ENCODE measurements at regions of chr6 and their contacts with region 1.

Region 1: DNA sequence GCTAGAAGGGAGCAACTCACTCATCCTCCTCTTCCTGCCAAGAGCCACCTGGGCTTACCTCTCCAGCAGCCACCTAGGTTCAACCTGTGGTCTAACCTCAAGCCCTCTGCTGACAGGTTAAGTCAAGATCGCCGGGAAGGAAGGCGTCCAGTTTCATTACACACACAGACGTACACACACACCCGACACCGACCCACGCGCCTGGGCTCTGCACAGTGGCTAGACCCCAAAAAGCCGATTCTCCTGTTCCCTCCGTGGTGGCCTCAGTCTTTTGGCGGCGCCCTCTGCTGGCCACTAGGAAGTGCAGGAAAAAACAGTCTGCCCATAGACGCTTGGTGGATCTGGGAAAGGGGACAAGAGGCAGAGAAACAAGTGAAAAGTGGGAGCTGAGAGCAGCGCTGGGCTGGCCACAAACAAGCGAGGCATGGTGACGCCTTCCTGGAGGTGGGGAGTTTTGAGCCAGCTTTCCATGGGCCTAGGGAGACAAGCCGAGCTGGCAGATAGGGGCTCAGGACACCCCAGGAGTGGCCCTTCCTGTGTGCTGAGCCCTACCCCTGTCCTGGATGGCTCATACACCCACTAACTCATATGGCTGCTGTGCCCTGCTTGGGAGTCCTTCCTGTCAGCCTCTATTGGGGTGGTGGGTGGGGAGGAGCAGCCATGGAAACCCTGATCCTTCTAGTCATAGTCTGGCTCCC is 52.7 kb downstream of the MRPL14 start:
- DNase-seq: peak; percentile 67 to 73
- ATAC-seq: peak; percentile 61 to 86
- H3K4me3 ChIP-seq: no peak overlapping the region
- H3K27ac ChIP-seq: peak overlapping the region; percentile 87 to 97
- H3K4me1 ChIP-seq: peaks cover 37% of the 10 kb centered on the region
- CTCF ChIP-seq: peak; percentile 82
- EP300 ChIP-seq: no peak
- POLR2A ChIP-seq: no peak
- RAD21 ChIP-seq: peak; percentile 84 to 85

Region 2: GRCh38 chr6:43667245-43668150 is 407.1 kb before region 1 on chr6:
- CTCF ChIA-PET with region 1: interaction called, 37 read pairs
- POLR2A ChIA-PET with region 1: no interaction called
- DNase-seq: peak; percentile 54 to 68
- ATAC-seq: peak; percentile 71 to 81
- H3K4me3 ChIP-seq: no peak overlapping the region
- H3K27ac ChIP-seq: peak overlapping the region; percentile 28 to 66; a peak in 2 of 6 replicates
- H3K4me1 ChIP-seq: peaks cover 14% of the 10 kb centered on the region; the same call in 2 of the 3 replicates
- CTCF ChIP-seq: peak; percentile 77
- EP300 ChIP-seq: no peak
- POLR2A ChIP-seq: no peak
- RAD21 ChIP-seq: peak; percentile 87 to 88

Region 3: DNA sequence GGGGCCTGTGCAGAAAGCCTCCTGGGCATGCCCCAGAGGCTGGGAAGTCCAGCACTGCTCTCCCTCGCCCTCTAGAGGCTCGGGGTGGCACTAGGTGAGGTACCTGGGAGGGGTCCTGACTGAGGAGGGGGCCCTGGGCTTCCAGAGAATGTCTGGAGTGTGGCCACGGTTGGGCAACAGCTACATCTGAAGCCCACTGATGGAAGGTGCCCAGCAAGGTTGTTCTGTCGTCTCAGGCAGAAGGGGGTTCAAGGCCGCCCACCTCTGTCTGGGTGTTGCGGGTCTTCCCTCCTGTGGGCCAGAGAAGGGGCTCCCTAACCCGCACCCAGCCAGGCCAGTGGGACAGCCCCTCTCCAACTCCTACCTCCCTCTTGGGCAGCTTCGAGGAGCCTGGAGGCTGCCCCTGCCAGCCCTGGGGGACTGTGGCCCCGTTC is 316.0 kb before region 1 on chr6:
- CTCF ChIA-PET with region 1: interaction called, 52 read pairs
- POLR2A ChIA-PET with region 1: no interaction called
- DNase-seq: peak in 1 of 2 experiments; percentile 27
- ATAC-seq: peak; percentile 57 to 85; a peak in 4 of 6 replicates
- H3K4me3 ChIP-seq: no peak overlapping the region
- H3K27ac ChIP-seq: 0 out of 6 replicates have a peak overlapping the region, but pooled peaks of 1 of the 2 experiments have one; percentile 27
- H3K4me1 ChIP-seq: no peaks in the 10 kb centered on the region
- CTCF ChIP-seq: peak; percentile 52
- EP300 ChIP-seq: no peak
- POLR2A ChIP-seq: no peak
- RAD21 ChIP-seq: peak; percentile 53 to 60

Region 4: GRCh38 chr6:43856005-43856765 is 218.4 kb before region 1 on chr6:
- CTCF ChIA-PET with region 1: interaction called, 18 read pairs
- POLR2A ChIA-PET with region 1: no interaction called
- DNase-seq: peak; percentile 45 to 50
- ATAC-seq: peak; percentile 85 to 89
- H3K4me3 ChIP-seq: no peak overlapping the region
- H3K27ac ChIP-seq: peak overlapping the region; percentile 38 to 48; a peak in 2 of 6 replicates
- H3K4me1 ChIP-seq: no peaks in the 10 kb centered on the region
- CTCF ChIP-seq: peak; percentile 37
- EP300 ChIP-seq: no peak
- POLR2A ChIP-seq: no peak
- RAD21 ChIP-seq: peak; percentile 41 to 50; a peak in 4 of 5 replicates

Region 5: GRCh38 chr6:44022296-44022661 is 52.3 kb before region 1 on chr6:
- CTCF ChIA-PET with region 1: interaction called, 10 read pairs
- POLR2A ChIA-PET with region 1: no interaction called
- DNase-seq: no peak
- ATAC-seq: peak in 1 of 2 experiments; percentile 62; a peak in 3 of 6 replicates
- H3K4me3 ChIP-seq: no peak overlapping the region
- H3K27ac ChIP-seq: peak overlapping the region; percentile 13 to 81; a peak in 5 of 6 replicates
- H3K4me1 ChIP-seq: peaks cover 24% of the 10 kb centered on the region
- CTCF ChIP-seq: no peak
- EP300 ChIP-seq: no peak
- POLR2A ChIP-seq: no peak
- RAD21 ChIP-seq: no peak

Region 6: GRCh38 chr6:44058617-44059358 is 15.8 kb before region 1 on chr6:
- CTCF ChIA-PET with region 1: interaction called, 49 read pairs
- POLR2A ChIA-PET with region 1: interaction called, 4 read pairs
- DNase-seq: peak; percentile 85 to 96
- ATAC-seq: peak; percentile 90 to 95
- H3K4me3 ChIP-seq: no peak overlapping the region
- H3K27ac ChIP-seq: peak overlapping the region; percentile 97 to 98
- H3K4me1 ChIP-seq: peaks cover 75% of the 10 kb centered on the region
- CTCF ChIP-seq: no peak
- EP300 ChIP-seq: peak; percentile 69 to 85; a peak in 2 of 5 replicates
- POLR2A ChIP-seq: no peak
- RAD21 ChIP-seq: peak in 1 of 2 experiments; percentile 50; a peak in 2 of 5 replicates

Region 7: DNA sequence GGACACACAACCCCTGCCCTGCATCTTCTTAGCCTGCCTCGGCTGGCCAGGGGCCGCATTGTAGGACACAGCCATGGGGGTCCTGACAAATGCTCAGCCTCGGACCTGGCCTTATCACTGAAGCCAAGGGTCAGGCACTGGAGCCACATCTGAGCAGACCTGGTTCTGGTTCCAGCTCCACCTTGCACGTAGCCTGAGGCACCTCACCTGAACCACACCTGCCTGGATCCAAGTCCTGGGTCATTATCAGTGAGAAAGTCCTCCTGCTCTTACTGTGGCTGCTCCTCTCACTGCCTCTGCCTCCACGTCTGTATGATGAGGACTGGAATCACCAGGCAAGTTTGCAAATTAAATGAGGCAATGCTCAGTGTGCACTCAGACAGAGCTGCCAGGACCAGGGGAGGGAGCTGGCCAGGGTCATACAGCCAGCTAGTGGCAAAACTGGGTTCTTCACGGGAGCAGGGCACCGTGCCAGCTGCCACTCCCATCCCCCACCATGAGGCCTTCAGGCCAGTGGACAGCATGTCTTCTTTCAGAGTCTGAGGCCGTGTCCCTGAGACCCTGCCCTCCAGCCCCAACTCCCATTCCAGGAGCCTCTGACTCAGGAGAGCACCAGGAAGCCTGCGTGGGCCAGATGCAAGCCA is 12.5 kb after region 1 on chr6:
- CTCF ChIA-PET with region 1: interaction called, 13 read pairs
- POLR2A ChIA-PET with region 1: no interaction called
- DNase-seq: no peak
- ATAC-seq: peak in 1 of 2 experiments; percentile 36; a peak in 4 of 6 replicates
- H3K4me3 ChIP-seq: no peak overlapping the region
- H3K27ac ChIP-seq: no peak overlapping the region
- H3K4me1 ChIP-seq: no peaks in the 10 kb centered on the region
- CTCF ChIP-seq: no peak
- EP300 ChIP-seq: no peak
- POLR2A ChIP-seq: no peak
- RAD21 ChIP-seq: no peak

Measured in A549 (cell line).